Activated CD4-positive, alpha-beta memory T cell treated with anti-CD3 and anti-CD28 coated beads for 36 hours (primary cell): ENCODE measurements at regions of chr17 and their contacts with region 1.

Region 1: DNA sequence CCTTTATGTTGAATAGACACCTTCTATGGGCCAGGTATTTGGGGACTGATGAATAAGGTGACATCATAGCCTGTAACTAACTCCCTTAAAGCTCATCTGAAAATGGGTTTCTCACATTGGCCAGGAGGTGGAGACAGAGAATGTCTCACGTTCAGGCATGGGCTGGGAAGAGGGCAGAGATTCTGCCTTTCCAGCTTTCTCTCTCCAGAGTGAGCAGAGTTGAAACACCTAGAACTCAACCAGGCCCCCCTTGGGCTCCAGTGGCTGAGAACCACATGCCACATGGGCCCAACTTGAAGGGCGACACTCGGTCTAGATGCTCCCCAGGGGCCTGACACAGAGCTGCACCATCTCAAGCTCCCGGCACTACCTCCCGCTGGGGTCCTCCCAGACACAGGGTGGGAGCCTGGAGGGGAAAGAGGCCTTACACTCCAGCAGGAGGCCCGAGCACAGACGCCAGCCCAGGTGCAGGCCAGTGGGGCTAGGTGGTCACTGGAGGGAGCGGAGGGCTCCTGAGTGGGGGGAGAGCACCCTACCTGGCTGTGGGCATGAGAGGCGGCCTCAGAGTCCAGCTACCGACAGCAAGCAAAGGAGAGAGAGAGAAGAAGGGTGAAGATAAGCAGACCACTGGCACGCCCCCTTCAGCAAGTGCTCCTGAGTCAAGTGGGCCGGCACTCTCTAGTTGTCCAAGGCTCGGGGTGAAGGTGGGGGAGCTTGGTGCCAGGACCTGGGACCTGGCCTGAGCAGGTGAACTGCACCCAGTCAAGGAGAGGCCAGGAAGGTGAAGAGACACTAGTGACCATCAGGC is 55.9 kb downstream of the MYO18A start:
- DNase-seq: peak; percentile 60
- H3K4me3 Mint-ChIP-seq: no peak overlapping the region
- H3K27ac Mint-ChIP-seq: no peak overlapping the region
- H3K4me1 Mint-ChIP-seq: no peaks in the 10 kb centered on the region
- H3K27me3 Mint-ChIP-seq: no peaks in the 10 kb centered on the region

Region 2: DNA sequence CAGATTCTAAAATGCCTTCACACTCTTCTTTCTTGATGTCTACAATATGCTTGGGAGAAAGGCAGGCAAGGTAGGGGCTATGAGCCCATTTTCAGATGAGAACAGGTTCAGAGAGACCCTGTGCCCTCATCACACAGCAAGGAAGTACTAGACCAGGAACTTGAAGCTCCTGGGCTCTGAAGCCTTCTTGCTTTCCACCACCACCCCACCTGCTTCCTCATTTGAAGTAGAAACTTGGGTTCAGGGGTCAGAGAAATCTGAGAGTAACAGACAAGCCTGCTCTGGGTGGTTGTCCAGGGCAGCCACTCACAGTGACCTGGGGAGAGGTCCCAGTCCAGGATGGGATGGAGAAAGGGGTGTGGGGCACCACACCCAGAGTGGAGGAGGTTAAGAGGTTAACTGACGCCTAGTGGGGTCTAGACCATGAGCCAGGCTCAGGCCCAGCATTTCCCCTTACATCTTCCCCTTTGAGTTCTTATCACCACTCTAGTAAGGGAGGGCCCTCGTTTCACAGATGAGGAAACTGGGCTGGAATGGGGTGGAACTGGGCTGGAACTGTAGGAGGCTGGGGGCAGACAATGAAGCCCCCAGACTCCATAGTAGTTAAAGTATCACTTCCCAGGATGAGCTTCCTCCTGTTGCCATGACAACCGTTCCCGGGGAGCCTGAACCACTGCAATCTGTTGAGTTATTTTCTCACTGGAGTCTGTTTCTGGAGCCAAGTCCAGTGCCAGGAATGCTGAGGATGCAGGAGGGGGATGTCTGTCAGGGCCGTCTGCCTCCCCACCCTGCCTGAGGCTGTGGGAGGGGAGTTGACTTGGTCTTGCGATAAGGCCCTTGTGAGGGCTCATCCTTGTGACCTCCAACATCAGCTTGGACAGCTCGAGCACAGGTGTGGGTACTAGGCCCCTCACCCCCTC is 156.8 kb before region 1 on chr17:
- CTCF ChIA-PET with region 1: interaction called, 18 read pairs
- POLR2A ChIA-PET with region 1: interaction called, 3 read pairs
- intact Hi-C with region 1: no loop called
- DNase-seq: no peak
- H3K4me3 Mint-ChIP-seq: no peak overlapping the region
- H3K27ac Mint-ChIP-seq: no peak overlapping the region
- H3K4me1 Mint-ChIP-seq: no peaks in the 10 kb centered on the region
- H3K27me3 Mint-ChIP-seq: peaks cover 13% of the 10 kb centered on the region

Region 3: DNA sequence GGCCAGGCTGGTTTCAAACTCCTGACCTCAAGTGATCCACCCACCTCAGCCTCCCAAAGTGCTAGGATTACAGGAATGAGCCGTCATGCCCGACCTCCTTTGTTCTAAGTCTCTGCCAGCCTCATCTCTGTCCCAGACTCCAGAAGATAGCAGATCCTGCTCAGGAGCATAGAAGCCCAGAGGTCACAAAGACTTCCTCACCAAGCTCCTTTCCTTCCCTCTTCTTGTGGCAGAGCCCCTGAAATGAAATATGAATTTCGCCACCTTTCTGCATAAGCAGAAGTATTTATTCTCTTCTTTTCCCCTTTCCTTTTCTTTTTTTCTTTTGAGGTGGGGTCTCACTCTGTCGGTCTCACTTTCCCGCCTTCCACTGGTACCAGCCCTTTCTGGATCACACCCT is 92.8 kb before region 1 on chr17:
- CTCF ChIA-PET with region 1: no interaction called
- POLR2A ChIA-PET with region 1: no interaction called
- intact Hi-C with region 1: no loop called
- DNase-seq: no peak
- H3K4me3 Mint-ChIP-seq: no peak overlapping the region
- H3K27ac Mint-ChIP-seq: no peak overlapping the region
- H3K4me1 Mint-ChIP-seq: no peaks in the 10 kb centered on the region
- H3K27me3 Mint-ChIP-seq: peaks cover 38% of the 10 kb centered on the region

Region 4: GRCh38 chr17:29111816-29112499 is 12.4 kb before region 1 on chr17:
- CTCF ChIA-PET with region 1: interaction called, 216 read pairs
- POLR2A ChIA-PET with region 1: no interaction called
- intact Hi-C with region 1: no loop called
- DNase-seq: peak; percentile 80
- H3K4me3 Mint-ChIP-seq: no peak overlapping the region
- H3K27ac Mint-ChIP-seq: no peak overlapping the region
- H3K4me1 Mint-ChIP-seq: peaks cover 2% of the 10 kb centered on the region
- H3K27me3 Mint-ChIP-seq: no peaks in the 10 kb centered on the region

Region 5: DNA sequence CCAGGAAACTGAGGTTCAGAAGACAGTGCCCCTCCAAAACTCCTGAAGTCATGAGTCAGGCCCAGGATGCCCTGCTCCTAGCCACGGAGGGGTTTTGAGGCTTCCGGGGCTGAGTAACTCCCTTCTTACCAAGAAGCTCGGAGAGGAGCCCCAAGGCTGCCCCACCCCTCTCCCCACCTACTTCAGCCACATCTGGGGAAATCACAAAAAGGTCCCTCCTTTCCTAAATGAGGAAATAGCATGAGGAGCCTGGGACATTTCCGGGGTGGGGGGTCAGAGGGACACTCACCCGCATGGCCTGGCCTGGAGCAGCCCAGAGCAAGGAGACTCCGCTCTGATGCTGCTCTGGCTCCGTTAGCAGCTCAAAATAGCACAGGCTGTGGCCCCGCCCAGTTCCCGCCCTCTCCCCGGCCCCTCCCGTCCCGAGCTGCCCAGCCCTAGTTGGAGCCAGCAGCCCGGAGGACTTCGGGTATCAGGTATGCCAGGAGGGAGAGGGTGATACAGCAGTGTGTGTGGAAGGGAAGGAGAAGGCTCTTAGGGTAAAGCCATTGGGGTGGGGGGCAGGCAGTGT is 15.8 kb after region 1 on chr17:
- CTCF ChIA-PET with region 1: interaction called, 394 read pairs
- POLR2A ChIA-PET with region 1: interaction called, 8 read pairs
- intact Hi-C with region 1: loop called (anchors 1 kb)
- DNase-seq: peak; percentile 93
- H3K4me3 Mint-ChIP-seq: peak overlapping the region; percentile 93
- H3K27ac Mint-ChIP-seq: peak overlapping the region; percentile 97
- H3K4me1 Mint-ChIP-seq: peaks cover 69% of the 10 kb centered on the region
- H3K27me3 Mint-ChIP-seq: no peaks in the 10 kb centered on the region

Region 6: GRCh38 chr17:29155227-29155965 is 31.1 kb after region 1 on chr17:
- CTCF ChIA-PET with region 1: interaction called, 394 read pairs
- POLR2A ChIA-PET with region 1: no interaction called
- intact Hi-C with region 1: no loop called
- DNase-seq: peak; percentile 84
- H3K4me3 Mint-ChIP-seq: peak overlapping the region; percentile 52
- H3K27ac Mint-ChIP-seq: peak overlapping the region; percentile 79
- H3K4me1 Mint-ChIP-seq: peaks cover 32% of the 10 kb centered on the region
- H3K27me3 Mint-ChIP-seq: no peaks in the 10 kb centered on the region

Region 7: GRCh38 chr17:29172589-29172988 is 48.3 kb after region 1 on chr17:
- CTCF ChIA-PET with region 1: interaction called, 72 read pairs
- POLR2A ChIA-PET with region 1: interaction called, 5 read pairs
- intact Hi-C with region 1: no loop called
- DNase-seq: no peak
- H3K4me3 Mint-ChIP-seq: no peak overlapping the region
- H3K27ac Mint-ChIP-seq: no peak overlapping the region
- H3K4me1 Mint-ChIP-seq: peaks cover 12% of the 10 kb centered on the region
- H3K27me3 Mint-ChIP-seq: no peaks in the 10 kb centered on the region

Region 8: GRCh38 chr17:29180034-29180787 is 55.9 kb after region 1 on chr17 and contains the start of gene MYO18A:
- CTCF ChIA-PET with region 1: interaction called, 72 read pairs
- POLR2A ChIA-PET with region 1: interaction called, 5 read pairs
- intact Hi-C with region 1: no loop called
- DNase-seq: peak; percentile 86
- H3K4me3 Mint-ChIP-seq: peak within 1 kb of the TSS; percentile 56
- H3K27ac Mint-ChIP-seq: no peak within 1 kb of the TSS
- H3K4me1 Mint-ChIP-seq: peaks cover 36% of the 10 kb centered on the region
- H3K27me3 Mint-ChIP-seq: peaks cover 2% of the 10 kb centered on the region
- total RNA-seq, gene MYO18A: 46.3 to 47.1 TPM